Activated CD4-positive, alpha-beta T cell treated with anti-CD3 and anti-CD28 coated beads, Interleukin-2, amount 10 ng/mL, durations not matched to agents 24 days and 14 days (primary cell): ENCODE measurements at regions of chr1 and their contacts with region 1.

Region 1: GRCh38 chr1:167220537-167221125 is at the start of gene POU2F1:
- DNase-seq: peak; percentile 99
- H3K4me3 Mint-ChIP-seq: peak within 1 kb of the TSS; percentile 98
- H3K27ac Mint-ChIP-seq: peak within 1 kb of the TSS; percentile 99
- H3K4me1 Mint-ChIP-seq: peaks cover 37% of the 10 kb centered on the region
- H3K27me3 Mint-ChIP-seq: peaks cover 2% of the 10 kb centered on the region
- total RNA-seq, gene POU2F1: 17.2 and 17.5 TPM in 2 replicates

Region 2: DNA sequence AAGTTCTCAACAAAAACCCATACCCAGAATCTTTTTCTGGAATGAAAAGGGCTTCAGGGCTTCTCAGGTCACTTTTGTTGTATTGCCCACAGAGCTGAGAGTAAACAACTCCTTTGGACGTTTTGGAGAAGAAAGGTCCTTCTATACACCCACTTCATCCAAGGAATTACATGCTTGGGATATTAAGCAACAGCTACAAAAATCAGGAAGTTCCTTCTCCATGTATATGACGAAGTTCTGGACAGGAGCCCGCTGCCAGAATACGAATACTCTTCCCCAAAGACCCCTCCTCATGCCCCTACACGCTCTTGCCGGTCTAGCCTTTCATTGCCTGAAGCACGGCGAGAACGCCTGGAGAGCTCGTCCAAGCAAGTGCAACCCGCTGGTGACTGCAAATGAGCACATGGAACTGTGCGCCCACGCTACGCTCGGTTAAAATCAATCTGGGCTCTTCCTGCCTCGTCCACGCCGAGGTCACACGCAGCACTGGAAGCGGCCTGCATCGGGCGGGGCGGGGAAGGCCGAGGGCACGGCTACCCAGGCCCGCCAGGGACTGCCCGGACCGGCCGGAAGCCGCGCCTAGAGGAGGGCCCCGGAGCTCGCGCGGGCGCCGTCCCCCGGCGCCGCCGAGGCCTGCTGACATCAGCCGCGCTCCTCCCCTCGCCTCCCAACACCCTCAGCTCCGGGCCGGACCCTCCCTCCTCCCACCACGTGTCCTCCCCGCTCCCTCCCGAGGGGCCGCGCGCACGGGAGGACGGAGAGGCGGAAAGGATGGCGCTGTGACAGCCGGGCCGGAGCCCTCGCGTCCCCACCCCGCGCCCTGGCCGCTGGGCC is 381.6 kb before region 1 on chr1 and contains the start of gene POGK:
- intact Hi-C with region 1: loop called (anchors 1 kb)
- DNase-seq: peak; percentile 95
- H3K4me3 Mint-ChIP-seq: peak within 1 kb of the TSS; percentile 95
- H3K27ac Mint-ChIP-seq: peak within 1 kb of the TSS; percentile 98
- H3K4me1 Mint-ChIP-seq: peaks cover 39% of the 10 kb centered on the region
- H3K27me3 Mint-ChIP-seq: peaks cover 2% of the 10 kb centered on the region
- total RNA-seq, gene POGK: 52.4 and 53.9 TPM in 2 replicates

Region 3: DNA sequence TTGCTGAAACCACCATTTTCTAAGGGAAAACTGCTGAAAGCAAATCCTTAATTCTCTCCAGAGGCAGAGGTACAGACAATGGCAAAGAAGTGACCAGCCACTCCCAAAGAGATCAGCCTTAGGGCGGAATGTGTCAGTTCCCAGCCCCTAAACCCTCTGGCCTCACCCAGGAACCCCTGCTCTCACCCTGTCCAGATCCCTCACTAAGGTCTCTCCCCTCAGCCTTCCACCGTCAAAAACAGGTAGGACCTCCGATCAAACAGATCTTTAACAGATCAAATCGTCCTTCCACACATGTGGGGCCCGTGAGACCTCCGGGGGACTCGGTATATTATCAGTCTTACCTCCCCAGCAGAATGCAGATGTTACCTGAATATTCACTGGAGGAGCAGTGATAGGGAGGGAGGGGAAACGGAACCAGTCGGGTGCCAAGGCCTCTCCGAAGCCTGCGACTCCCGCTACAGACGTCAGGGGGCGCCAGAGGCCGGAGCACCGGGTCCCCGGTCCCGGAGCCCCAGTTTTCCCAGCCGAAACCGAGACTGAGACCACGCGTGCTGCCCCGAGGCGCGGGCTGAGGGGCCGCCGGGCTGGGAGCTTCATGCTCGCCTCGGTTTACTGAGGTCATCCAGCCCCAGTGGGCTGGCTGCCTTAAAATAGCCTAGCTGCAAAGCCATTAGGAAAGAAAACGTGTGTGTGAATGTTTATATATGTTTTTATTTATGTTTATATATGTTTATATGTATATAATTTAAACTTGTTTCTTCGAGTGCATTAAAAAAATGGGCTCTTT is 154.1 kb before region 1 on chr1:
- intact Hi-C with region 1: loop called (anchors 2 kb)
- DNase-seq: peak; percentile 94
- H3K4me3 Mint-ChIP-seq: peak overlapping the region; percentile 51
- H3K27ac Mint-ChIP-seq: no peak overlapping the region
- H3K4me1 Mint-ChIP-seq: no peaks in the 10 kb centered on the region
- H3K27me3 Mint-ChIP-seq: peaks cover 1% of the 10 kb centered on the region

Region 4: GRCh38 chr1:167263819-167264464 is 43.3 kb after region 1 on chr1:
- intact Hi-C with region 1: loop called (anchors 2 kb)
- DNase-seq: peak; percentile 63
- H3K4me3 Mint-ChIP-seq: no peak overlapping the region
- H3K27ac Mint-ChIP-seq: no peak overlapping the region
- H3K4me1 Mint-ChIP-seq: peaks cover 16% of the 10 kb centered on the region
- H3K27me3 Mint-ChIP-seq: no peaks in the 10 kb centered on the region

Region 5: GRCh38 chr1:167553136-167554027 is 332.8 kb after region 1 on chr1 and contains the start of gene CREG1:
- intact Hi-C with region 1: loop called (anchors 5 kb)
- DNase-seq: peak; percentile 98
- H3K4me3 Mint-ChIP-seq: peak within 1 kb of the TSS; percentile 88
- H3K27ac Mint-ChIP-seq: no peak within 1 kb of the TSS
- H3K4me1 Mint-ChIP-seq: peaks cover 26% of the 10 kb centered on the region
- H3K27me3 Mint-ChIP-seq: peaks cover 6% of the 10 kb centered on the region
- total RNA-seq, gene CREG1: 12.3 and 13.6 TPM in 2 replicates

Region 6: GRCh38 chr1:167936068-167936929 is 715.7 kb after region 1 on chr1 and contains the start of gene DCAF6:
- intact Hi-C with region 1: loop called (anchors 1 kb)
- DNase-seq: peak; percentile 99
- H3K4me3 Mint-ChIP-seq: peak within 1 kb of the TSS; percentile 97
- H3K27ac Mint-ChIP-seq: peak within 1 kb of the TSS; percentile 98
- H3K4me1 Mint-ChIP-seq: peaks cover 33% of the 10 kb centered on the region
- H3K27me3 Mint-ChIP-seq: no peaks in the 10 kb centered on the region
- total RNA-seq, gene DCAF6: 20.6 and 24.1 TPM in 2 replicates